ENCODE measurements at regions of chr1 and their contacts with region 1.

Region 1: DNA sequence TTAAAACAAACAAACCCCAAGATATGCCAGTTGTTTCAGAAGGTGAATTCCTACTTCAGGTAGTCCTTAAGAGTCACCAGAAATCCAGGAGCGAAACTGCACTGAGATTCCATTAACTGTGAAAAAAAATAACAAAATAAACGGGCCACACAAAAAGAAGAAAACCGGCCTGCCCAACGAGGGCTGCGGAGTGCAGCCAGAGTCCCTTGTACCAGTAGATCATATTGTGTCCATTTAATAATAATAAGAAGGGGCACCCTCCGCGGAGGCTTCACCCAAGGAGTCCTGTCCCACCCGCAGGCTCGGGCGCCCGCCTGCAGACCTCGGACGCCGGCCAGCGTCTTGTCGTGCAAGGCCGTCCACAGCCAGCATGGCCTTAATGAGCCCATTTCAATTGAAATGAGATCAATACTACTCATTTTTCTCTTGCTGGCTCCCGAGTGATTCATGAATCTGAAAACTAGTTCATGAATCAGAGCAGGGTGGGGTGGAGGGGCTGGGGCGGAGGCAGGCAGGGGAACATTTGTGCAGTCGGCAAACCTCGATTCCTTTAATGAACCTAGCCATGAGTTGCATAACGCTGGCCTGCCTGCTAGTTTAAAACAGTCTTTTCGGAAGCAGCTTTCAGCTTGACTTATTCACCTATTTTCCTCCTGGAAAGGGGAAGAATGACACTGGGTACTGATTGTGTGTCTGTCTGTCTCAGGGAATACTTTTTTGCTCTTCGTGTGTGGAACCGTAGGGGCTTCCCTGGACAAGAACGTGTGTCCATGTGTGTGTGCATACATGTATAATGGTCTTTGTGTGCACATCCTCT is 113.1 kb upstream of the IRF2BP2 start:
- DNase-seq: peak; percentile 63 to 93
- H3K4me3 ChIP-seq: peak overlapping the region; percentile 26 to 46
- H3K27ac ChIP-seq: peak overlapping the region; percentile 95 to 97
- H3K4me1 ChIP-seq: peaks cover 36 to 79% of the 10 kb centered on the region in 2 donors
- H3K27me3 ChIP-seq: no peaks in the 10 kb centered on the region
- CTCF ChIP-seq: no peak

Region 2: DNA sequence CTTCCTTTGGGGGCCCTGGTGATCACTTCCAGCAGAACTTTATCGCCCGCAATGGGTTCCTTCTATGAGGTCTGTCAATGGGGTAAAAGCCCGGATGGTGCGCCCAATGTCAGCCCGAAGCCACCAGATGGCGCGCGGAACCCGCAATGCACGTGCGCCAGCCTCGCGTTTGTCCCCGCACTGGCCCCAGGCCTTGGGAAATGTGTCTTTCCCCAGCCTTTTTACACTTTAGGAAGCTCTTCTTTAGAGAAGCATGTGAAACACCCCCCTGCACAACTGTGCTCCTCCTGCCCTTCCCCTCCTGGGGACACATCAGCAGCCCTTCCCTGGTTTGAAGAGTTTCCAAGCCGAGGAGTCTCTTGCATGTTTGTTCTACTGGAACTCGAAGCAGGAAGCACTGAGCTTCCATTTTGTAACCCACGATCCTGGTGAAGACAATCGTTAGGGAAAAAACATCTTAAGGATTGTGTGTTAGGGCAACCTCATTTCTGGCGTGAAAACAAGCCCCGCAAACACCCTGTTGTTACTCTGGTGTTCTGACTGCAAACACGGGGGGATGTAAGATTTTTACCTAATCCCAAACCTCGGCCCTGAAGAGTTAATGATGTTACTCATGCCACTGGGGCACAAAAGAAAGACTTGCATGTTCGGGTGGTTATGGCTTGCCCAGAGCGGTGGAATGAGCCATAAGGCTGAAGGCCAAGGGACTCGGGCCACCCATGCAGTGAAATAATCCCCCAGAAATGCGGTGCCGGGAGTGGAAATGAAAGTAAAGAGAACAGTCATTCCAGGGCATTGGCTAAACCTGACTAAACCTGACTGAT is 223.8 kb before region 1 on chr1:
- intact Hi-C with region 1: loop called (anchors 2 kb)
- DNase-seq: peak; percentile 71 to 96
- H3K4me3 ChIP-seq: peak overlapping the region; percentile 17 to 49
- H3K27ac ChIP-seq: peak overlapping the region; percentile 85 to 95
- H3K4me1 ChIP-seq: peaks cover 8 to 30% of the 10 kb centered on the region in 2 donors
- H3K27me3 ChIP-seq: no peaks in the 10 kb centered on the region
- CTCF ChIP-seq: peak; percentile 94 to 97 (median 94)

Region 3: GRCh38 chr1:234683861-234684632 is 39.1 kb before region 1 on chr1:
- intact Hi-C with region 1: loop called (anchors 2 kb)
- DNase-seq: peak in 1 of 2 donors; percentile 88
- H3K4me3 ChIP-seq: no peak overlapping the region
- H3K27ac ChIP-seq: no peak overlapping the region
- H3K4me1 ChIP-seq: peaks cover 8 to 11% of the 10 kb centered on the region in 2 donors
- H3K27me3 ChIP-seq: no peaks in the 10 kb centered on the region
- CTCF ChIP-seq: no peak

Region 4: GRCh38 chr1:234862944-234863515 is 139.9 kb after region 1 on chr1:
- intact Hi-C with region 1: loop called (anchors 5 kb)
- DNase-seq: peak; percentile 48 to 88
- H3K4me3 ChIP-seq: peak overlapping the region in 1 of 2 donors; percentile 29
- H3K27ac ChIP-seq: peak overlapping the region; percentile 80 to 89
- H3K4me1 ChIP-seq: peaks cover 0 to 33% of the 10 kb centered on the region in 2 donors
- H3K27me3 ChIP-seq: no peaks in the 10 kb centered on the region
- CTCF ChIP-seq: no peak

Region 5: GRCh38 chr1:234980645-234981396 is 257.7 kb after region 1 on chr1:
- intact Hi-C with region 1: loop called (anchors 2 kb)
- DNase-seq: peak; percentile 91 to 98
- H3K4me3 ChIP-seq: peak overlapping the region in 1 of 2 donors; percentile 44
- H3K27ac ChIP-seq: peak overlapping the region; percentile 98 to 99
- H3K4me1 ChIP-seq: peaks cover 24 to 65% of the 10 kb centered on the region in 2 donors
- H3K27me3 ChIP-seq: no peaks in the 10 kb centered on the region
- CTCF ChIP-seq: no peak

Measured in ascending aorta (tissue), 2 donors.